GM12878 (cell line): ENCODE measurements at regions of chr14 and their contacts with region 1.

Region 1: DNA sequence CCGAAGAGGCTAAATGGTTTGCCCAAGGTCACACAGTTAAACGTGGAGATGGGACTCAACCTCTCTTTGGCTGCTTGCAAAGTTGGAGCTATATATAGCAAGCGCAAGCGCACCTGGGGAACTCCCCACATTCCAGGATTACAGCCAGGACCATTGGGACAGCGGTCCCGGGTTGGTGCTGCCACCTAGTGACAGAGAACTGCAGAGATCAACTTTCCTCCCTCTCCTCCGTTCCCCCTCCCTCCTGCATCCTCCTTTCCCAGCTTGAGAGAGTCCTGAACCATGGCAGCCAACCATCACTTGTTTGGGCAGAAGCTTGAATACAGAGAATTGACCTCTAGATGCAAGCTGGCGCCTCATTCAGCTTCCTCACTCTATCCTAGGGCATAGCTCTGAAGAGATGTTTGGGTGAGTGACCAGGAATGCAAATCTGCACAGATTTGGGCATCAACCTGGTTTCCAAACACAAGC is 17.4 kb upstream of the FLVCR2 start:
- DNase-seq: no peak
- ATAC-seq: peak; percentile 77
- H3K4me3 ChIP-seq: no peak overlapping the region
- H3K27ac ChIP-seq: no peak overlapping the region
- H3K4me1 ChIP-seq: peaks cover 27% of the 10 kb centered on the region
- H3K27me3 ChIP-seq: no peaks in the 10 kb centered on the region
- CTCF ChIP-seq: peak; percentile 84 to 91 (median 86)
- EP300 ChIP-seq: no peak
- POLR2A ChIP-seq: no peak
- RAD21 ChIP-seq: peak; percentile 82

Region 2: DNA sequence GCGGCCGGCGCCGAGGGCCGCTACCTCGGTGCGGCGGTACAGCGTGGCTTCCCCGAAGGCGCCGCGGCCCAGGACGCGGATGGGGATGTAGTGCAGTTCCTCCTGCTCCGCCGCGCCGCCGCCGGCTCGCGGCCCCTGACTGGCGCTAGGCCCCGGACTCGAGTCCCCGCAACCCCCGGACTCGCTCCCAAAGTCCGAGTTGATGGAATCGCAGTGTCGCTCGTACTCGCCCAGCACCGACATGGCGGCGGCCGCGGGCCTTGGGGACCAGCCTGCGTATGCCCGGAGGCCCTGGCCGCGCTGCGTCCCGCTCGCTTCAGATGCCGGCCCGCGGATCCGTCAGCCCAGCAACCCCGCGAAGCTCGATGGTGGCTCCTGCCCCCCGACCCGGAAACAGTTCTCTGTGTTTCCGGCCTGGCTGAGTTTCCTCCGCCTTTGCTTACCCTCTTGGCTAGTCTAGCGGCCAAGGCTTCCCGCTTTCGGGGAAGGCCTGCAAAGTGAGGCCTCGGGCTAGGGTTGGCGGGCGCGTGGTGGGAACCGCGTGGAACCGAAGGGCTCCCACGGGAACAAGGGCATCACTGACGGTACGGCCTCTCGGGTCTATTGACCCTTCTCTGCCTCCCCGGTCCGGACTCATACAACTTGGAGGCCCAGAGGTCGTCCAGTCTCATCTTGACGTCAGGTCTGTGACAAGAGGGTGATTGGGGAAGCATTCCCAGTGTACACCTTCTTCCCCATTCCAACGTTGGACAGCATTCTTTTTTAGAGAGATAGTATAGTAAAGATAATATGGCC is 434.1 kb before region 1 on chr14 and contains the start of gene NEK9:
- CTCF ChIA-PET with region 1: no interaction called
- POLR2A ChIA-PET with region 1: no interaction called
- RAD21 ChIA-PET with region 1: no interaction called
- SMC1A ChIA-PET with region 1: no interaction called
- in situ Hi-C with region 1: loop called (anchors 5 kb)
- intact Hi-C with region 1: loop called (anchors 10 kb)
- DNase-seq: peak; percentile 45
- ATAC-seq: peak; percentile 98
- H3K4me3 ChIP-seq: peak within 1 kb of the TSS; percentile 76
- H3K27ac ChIP-seq: peak within 1 kb of the TSS; percentile 88
- H3K4me1 ChIP-seq: peaks cover 11% of the 10 kb centered on the region
- H3K27me3 ChIP-seq: no peaks in the 10 kb centered on the region
- CTCF ChIP-seq: no peak
- EP300 ChIP-seq: no peak
- POLR2A ChIP-seq: peak; percentile 98
- RAD21 ChIP-seq: no peak
- polyA plus RNA-seq, gene NEK9: 6.0 to 15.7 TPM

Region 3: DNA sequence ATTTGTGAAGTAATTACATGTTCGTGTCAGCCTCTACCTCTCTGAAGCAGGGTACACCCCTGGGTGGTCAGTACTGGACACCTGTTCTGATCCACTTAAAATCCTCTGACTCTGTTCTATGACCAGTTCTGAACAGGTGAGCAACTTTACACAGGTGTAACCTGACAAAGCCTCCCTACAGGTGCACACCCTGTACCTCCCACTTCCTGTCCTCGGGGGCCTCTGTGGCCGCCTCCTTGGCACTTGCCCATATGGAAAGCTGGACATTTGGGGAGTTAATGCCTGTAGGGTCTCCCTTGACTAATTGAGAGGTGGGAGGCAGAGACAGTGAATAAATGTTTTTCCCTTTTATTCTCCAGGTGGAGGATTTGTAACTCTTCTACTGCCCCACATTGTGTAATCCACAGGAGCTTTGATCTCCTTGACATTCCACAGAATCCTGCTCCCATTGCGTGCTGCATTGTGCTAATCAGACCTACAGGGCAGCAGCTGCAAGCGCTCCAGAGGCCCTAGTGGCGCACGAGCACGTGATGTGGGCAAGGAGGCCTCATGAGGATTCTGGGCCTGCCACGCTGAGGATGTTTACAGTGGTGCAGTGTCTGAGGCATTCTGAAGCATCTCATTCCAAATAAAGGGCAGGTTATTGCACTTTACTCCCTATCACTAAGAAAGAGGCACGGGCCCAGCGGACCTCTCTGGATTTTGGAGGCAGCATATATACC is 84.6 kb before region 1 on chr14:
- CTCF ChIA-PET with region 1: interaction called, 8 read pairs
- POLR2A ChIA-PET with region 1: interaction called, 3 read pairs
- RAD21 ChIA-PET with region 1: interaction called, 11 read pairs
- SMC1A ChIA-PET with region 1: interaction called, 3 read pairs
- in situ Hi-C with region 1: no loop called
- intact Hi-C with region 1: no loop called
- DNase-seq: no peak
- ATAC-seq: no peak
- H3K4me3 ChIP-seq: no peak overlapping the region
- H3K27ac ChIP-seq: no peak overlapping the region
- H3K4me1 ChIP-seq: peaks cover 29% of the 10 kb centered on the region
- H3K27me3 ChIP-seq: no peaks in the 10 kb centered on the region
- CTCF ChIP-seq: no peak
- EP300 ChIP-seq: no peak
- POLR2A ChIP-seq: no peak
- RAD21 ChIP-seq: no peak

Region 4: GRCh38 chr14:75514673-75515628 is 46.0 kb before region 1 on chr14:
- CTCF ChIA-PET with region 1: interaction called, 481 read pairs
- POLR2A ChIA-PET with region 1: interaction called, 14 read pairs
- RAD21 ChIA-PET with region 1: interaction called, 167 read pairs
- SMC1A ChIA-PET with region 1: interaction called, 257 read pairs
- in situ Hi-C with region 1: no loop called
- intact Hi-C with region 1: loop called (anchors 1 kb)
- DNase-seq: peak; percentile 80
- ATAC-seq: peak; percentile 76
- H3K4me3 ChIP-seq: peak overlapping the region; percentile 73
- H3K27ac ChIP-seq: peak overlapping the region; percentile 97
- H3K4me1 ChIP-seq: peaks cover 54% of the 10 kb centered on the region
- H3K27me3 ChIP-seq: no peaks in the 10 kb centered on the region
- CTCF ChIP-seq: no peak
- EP300 ChIP-seq: peak in 1 of 2 experiments; percentile 73; a peak in 3 of 4 replicates
- POLR2A ChIP-seq: 0 out of 2 replicates have a peak, but pooled peaks have one; percentile 36
- RAD21 ChIP-seq: no peak

Region 5: GRCh38 chr14:75542588-75543091 is 18.4 kb before region 1 on chr14:
- CTCF ChIA-PET with region 1: interaction called, 84 read pairs
- POLR2A ChIA-PET with region 1: interaction called, 5 read pairs
- RAD21 ChIA-PET with region 1: interaction called, 32 read pairs
- SMC1A ChIA-PET with region 1: interaction called, 98 read pairs
- in situ Hi-C with region 1: no loop called
- intact Hi-C with region 1: no loop called
- DNase-seq: no peak
- ATAC-seq: peak; percentile 84
- H3K4me3 ChIP-seq: peak overlapping the region; percentile 52
- H3K27ac ChIP-seq: peak overlapping the region; percentile 96
- H3K4me1 ChIP-seq: peaks cover 60% of the 10 kb centered on the region
- H3K27me3 ChIP-seq: no peaks in the 10 kb centered on the region
- CTCF ChIP-seq: no peak
- EP300 ChIP-seq: no peak
- POLR2A ChIP-seq: peak; percentile 64
- RAD21 ChIP-seq: no peak

Region 6: DNA sequence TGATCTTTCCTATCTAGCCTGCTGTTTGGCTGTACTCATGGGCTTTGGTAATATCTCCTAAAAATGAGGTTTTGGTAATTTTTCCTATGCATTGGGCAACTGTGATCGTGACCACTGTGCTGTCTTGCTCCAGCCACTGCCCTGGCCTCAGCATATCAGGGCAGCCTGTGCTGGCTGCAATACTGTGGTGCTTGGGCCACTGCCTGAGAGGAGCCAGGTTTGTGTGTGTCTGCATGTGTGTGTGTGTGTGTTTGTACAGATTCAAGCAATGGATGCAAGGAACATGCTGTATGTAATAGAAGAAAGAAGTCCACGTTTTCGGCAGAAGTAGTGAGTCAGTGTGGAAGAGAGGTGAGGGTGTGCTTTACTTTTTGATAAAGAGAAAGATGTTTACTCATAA is 86.7 kb after region 1 on chr14:
- CTCF ChIA-PET with region 1: interaction called, 53 read pairs
- POLR2A ChIA-PET with region 1: no interaction called
- RAD21 ChIA-PET with region 1: interaction called, 3 read pairs
- SMC1A ChIA-PET with region 1: interaction called, 5 read pairs
- in situ Hi-C with region 1: no loop called
- intact Hi-C with region 1: no loop called
- DNase-seq: no peak
- ATAC-seq: no peak
- H3K4me3 ChIP-seq: no peak overlapping the region
- H3K27ac ChIP-seq: no peak overlapping the region
- H3K4me1 ChIP-seq: no peaks in the 10 kb centered on the region
- H3K27me3 ChIP-seq: no peaks in the 10 kb centered on the region
- CTCF ChIP-seq: no peak
- EP300 ChIP-seq: no peak
- POLR2A ChIP-seq: no peak
- RAD21 ChIP-seq: no peak